AG04450 (cell line): ENCODE measurements at regions of chr16 and their contacts with region 1.

Region 1: GRCh38 chr16:52191531-52192134 is 355.3 kb downstream of the TOX3 start:
- DNase-seq: peak; percentile 36
- H3K4me3 ChIP-seq: no peak overlapping the region
- H3K27ac ChIP-seq: no peak overlapping the region
- H3K27me3 ChIP-seq: no peaks in the 10 kb centered on the region
- CTCF ChIP-seq: peak; percentile 96

Region 2: DNA sequence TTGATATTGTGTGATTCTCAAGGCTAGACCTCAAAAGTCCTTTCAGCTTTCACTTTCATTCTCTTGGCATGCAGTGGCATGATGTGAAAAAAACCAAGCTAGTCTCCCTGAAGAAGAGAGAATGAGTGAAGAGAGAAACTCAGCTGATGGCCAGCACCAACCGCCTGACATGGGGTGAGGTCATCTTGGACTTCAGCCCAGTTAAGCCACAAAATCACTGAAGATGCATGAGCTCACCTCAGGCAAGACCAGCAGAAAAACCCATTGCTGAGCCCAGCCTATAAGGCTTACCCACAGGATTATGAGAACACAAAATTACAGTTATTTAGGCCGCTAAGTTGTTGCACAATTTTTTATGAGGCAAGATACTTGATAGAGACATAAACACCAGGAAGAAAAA is 141.2 kb before region 1 on chr16:
- CTCF ChIA-PET with region 1: no interaction called
- POLR2A ChIA-PET with region 1: no interaction called
- DNase-seq: no peak
- H3K4me3 ChIP-seq: no peak overlapping the region
- H3K27ac ChIP-seq: no peak overlapping the region
- H3K27me3 ChIP-seq: no peaks in the 10 kb centered on the region
- CTCF ChIP-seq: no peak

Region 3: DNA sequence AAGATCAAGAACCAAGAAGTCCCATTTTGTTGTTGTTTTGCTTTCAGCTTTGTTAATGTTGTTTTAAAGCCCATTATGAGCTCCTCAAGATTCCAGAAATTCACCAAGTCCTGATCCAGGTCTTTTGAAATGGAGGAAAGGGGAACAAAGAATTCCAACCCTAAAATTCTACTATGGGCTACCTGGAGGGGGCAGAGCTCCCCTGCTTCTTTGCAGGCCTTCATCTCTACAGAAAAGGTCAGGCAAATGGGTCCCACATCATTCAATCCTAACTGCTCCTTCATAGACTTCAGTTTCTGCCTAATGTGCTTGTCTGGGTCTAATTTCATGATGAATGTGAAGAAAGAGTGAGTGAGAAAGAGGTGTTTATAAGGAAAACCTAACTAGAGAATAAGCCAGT is 20.2 kb before region 1 on chr16:
- CTCF ChIA-PET with region 1: interaction called, 10 read pairs
- POLR2A ChIA-PET with region 1: no interaction called
- DNase-seq: no peak
- H3K4me3 ChIP-seq: no peak overlapping the region
- H3K27ac ChIP-seq: no peak overlapping the region
- H3K27me3 ChIP-seq: no peaks in the 10 kb centered on the region
- CTCF ChIP-seq: no peak

Region 4: DNA sequence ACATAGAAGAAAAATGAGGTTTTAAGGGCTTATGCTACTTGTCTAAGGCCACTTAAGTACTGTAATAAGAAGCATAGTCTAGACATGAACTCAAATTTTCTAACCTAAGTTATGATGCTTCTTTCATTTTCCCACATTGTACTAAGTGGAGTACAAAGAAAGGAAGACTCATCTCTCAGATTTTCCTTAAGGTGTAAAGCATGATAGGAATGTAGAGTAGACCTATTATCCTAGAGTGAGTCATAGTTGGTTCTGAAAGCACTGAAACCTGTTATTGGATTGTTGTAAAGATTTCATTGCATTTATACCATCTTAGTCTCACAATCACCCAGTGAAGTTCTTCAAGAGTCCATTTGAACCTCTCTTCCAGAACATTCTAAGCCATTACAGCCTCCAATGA is 11.5 kb after region 1 on chr16:
- CTCF ChIA-PET with region 1: interaction called, 14 read pairs
- POLR2A ChIA-PET with region 1: no interaction called
- DNase-seq: no peak
- H3K4me3 ChIP-seq: no peak overlapping the region
- H3K27ac ChIP-seq: no peak overlapping the region
- H3K27me3 ChIP-seq: no peaks in the 10 kb centered on the region
- CTCF ChIP-seq: no peak

Region 5: DNA sequence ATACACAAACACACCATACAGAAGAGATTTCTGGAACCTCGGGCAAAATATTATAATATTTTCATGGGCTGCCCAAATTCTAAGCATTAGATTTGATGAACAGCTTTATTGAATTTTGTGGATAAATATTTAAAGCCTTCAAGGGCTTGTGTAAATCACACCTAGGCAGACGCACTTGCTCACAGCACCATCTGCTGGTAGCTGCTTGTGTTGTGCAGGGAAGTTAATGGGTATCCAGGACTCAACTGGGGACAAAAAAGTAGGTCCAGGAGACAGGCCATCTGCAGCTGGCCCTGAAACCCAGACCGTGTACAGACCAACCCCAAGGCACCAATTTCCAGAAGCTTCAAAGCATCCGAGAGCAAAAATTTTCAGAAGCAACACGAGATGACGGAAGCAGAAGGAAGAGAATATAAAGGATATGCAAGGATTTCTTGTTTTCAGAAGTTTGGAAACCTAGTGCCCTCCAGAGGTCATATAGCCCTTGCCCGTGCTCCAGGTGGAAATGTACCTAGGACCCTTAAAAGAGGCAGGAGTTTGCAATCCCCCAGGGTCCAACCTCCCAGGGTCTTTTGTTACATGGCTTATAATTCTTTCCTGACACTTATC is 721.0 kb after region 1 on chr16:
- CTCF ChIA-PET with region 1: interaction called, 39 read pairs
- POLR2A ChIA-PET with region 1: no interaction called
- DNase-seq: peak; percentile 6
- H3K4me3 ChIP-seq: no peak overlapping the region
- H3K27ac ChIP-seq: no peak overlapping the region
- H3K27me3 ChIP-seq: no peaks in the 10 kb centered on the region
- CTCF ChIP-seq: peak; percentile 70

Region 6: DNA sequence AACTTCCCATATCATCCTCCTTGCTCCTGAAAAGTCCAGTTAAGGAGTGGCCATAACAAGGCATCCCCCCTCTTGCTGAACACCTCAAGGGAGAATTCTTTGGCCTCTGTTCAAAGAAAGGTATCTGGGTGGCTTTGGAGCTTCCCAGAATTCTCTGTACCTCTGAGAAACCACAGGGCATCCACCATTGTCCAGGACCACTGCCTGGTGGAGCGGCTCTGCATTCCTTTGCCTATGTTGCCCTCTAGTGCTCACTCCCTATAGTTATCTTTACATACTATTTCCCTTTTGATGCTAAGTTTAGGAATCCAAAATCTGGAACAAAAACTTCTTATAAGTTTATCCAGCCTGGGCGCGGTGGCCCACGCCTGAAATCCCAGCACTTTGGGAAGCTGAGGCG is 830.7 kb after region 1 on chr16:
- CTCF ChIA-PET with region 1: interaction called, 57 read pairs
- POLR2A ChIA-PET with region 1: no interaction called
- DNase-seq: peak; percentile 7
- H3K4me3 ChIP-seq: no peak overlapping the region
- H3K27ac ChIP-seq: no peak overlapping the region
- H3K27me3 ChIP-seq: no peaks in the 10 kb centered on the region
- CTCF ChIP-seq: peak; percentile 72

Region 7: GRCh38 chr16:53404959-53405358 is 1213.3 kb after region 1 on chr16:
- CTCF ChIA-PET with region 1: interaction called, 13 read pairs
- POLR2A ChIA-PET with region 1: no interaction called
- DNase-seq: no peak
- H3K4me3 ChIP-seq: no peak overlapping the region
- H3K27ac ChIP-seq: no peak overlapping the region
- H3K27me3 ChIP-seq: no peaks in the 10 kb centered on the region
- CTCF ChIP-seq: no peak